ENCODE measurements at regions of chr3 and their contacts with region 1.

Region 1: DNA sequence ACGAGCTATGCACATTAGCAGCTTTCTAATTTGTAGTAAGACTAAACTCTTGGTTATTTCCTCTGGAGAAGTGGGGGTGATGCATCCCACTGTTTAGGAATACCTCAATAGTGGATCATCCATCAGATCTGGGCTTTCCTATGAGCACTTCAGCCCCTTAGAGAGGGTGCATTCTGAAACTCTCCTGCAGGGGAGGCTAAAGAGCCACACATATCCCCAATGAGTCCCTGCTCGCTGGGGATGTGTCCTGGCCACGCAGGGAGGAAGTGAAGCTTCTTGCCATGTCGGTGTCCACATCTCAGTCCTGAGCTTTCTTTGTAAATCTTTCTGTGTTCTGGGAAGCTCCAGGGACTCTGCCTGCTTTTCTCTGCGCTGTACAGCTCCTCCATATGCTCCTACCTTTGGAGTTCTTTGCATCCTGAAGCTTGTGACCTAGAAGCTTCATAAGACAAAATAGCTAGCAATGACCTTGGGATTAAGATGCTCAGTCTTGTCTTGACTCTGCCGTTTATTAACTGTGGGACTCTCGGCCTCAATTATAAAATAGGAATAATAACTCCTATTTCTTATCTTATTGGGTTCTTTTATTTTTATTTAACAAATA is 28.3 kb upstream of the MASP1 start:
- DNase-seq: no peak

Region 2: DNA sequence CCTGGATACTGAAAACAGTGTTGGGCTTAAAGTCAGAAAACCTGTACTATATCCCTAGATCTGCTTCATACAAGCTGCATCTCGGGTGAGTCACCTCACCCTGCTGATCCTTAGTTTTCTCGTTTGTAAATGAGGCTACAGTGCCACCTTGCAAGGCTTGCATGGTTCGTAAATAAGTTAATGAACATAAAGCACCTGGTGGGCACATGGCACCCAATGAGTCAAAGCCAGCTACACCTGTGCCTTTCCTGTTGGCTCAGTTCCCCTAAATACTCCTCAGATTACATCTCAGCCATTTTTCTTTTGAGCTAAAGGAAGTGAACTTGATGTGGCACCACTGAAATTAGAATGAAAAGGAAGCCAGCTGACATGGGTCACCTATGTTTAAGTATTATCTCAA is 96.0 kb before region 1 on chr3:
- intact Hi-C with region 1: loop called (anchors 2 kb)
- DNase-seq: no peak

Region 3: DNA sequence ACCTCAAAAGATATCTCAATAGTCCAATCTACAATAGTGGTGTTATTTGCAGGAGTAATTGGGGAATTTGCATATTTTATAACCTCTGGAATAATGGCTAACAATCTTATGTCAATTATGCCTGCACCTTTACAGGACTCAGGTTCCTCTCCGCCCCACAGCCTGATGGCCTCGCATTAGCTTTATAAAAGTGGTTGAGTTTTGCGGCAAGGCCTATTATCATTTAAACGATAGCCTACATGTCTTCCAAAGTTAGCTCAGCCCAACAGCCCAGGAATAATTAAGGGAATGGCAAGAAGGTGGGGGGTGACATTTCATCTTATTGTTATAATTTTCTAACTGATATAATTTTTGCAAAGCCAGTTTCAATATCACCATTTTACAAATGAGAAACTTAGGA is 145.7 kb after region 1 on chr3:
- intact Hi-C with region 1: no loop called
- DNase-seq: no peak

Region 4: GRCh38 chr3:187714404-187714979 is 394.7 kb after region 1 on chr3:
- intact Hi-C with region 1: loop called (anchors 1 kb)
- DNase-seq: no peak

Measured in cardiac septum (tissue), 1 donor.